K562 (cell line): ENCODE measurements at regions of chr14 and their contacts with region 1.

Region 1: DNA sequence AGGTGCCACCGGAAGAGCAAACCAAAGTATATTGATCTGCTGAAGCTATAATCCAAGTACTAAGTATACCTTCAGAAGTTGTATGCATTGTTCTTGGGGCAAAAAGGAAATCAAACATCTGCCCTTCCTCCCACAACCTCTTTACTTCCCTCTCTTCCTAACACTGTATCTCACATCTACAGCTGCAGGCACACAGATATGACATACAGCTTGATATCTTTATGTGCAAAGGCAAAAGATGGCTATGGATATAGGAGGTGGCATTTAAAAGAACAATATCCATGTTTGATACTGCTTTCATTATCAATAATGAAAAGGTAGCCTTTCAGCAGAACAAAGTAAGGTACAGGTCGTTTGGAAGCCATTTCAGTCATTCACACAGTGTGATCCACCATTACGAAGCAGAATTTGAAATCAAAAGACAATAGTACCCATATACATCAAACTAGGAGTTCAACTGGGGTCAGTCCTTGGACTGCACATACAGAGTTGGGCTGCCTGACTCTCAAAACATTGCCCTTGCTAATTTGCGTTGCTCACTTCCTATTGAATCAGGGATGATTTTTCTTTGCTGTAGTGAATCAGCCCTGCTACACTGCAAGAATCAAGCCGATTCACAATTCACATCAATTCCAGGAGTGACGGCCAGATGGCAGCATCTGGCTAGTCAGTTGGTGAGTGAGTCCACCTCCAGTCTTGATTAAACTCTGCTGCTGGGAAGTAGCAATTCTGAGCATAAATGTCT is 8.9 kb downstream of the ANG start:
- DNase-seq: peak; percentile 34 to 83 (median 56)
- ATAC-seq: peak; percentile 94
- H3K4me3 ChIP-seq: no peak overlapping the region
- H3K27ac ChIP-seq: no peak overlapping the region
- H3K4me1 ChIP-seq: peaks cover 0 to 9% of the 10 kb centered on the region in 2 experiments; a peak in 2 of 5 replicates
- H3K27me3 ChIP-seq: peaks cover 3 to 6% of the 10 kb centered on the region in 2 experiments; a peak in 3 of 5 replicates
- CTCF ChIP-seq: peak; percentile 77 to 89 (median 80)
- EP300 ChIP-seq: peak; percentile 51; the same call in 1 of the 2 replicates
- POLR2A ChIP-seq: no peak
- RAD21 ChIP-seq: peak; percentile 93 to 94

Region 2: DNA sequence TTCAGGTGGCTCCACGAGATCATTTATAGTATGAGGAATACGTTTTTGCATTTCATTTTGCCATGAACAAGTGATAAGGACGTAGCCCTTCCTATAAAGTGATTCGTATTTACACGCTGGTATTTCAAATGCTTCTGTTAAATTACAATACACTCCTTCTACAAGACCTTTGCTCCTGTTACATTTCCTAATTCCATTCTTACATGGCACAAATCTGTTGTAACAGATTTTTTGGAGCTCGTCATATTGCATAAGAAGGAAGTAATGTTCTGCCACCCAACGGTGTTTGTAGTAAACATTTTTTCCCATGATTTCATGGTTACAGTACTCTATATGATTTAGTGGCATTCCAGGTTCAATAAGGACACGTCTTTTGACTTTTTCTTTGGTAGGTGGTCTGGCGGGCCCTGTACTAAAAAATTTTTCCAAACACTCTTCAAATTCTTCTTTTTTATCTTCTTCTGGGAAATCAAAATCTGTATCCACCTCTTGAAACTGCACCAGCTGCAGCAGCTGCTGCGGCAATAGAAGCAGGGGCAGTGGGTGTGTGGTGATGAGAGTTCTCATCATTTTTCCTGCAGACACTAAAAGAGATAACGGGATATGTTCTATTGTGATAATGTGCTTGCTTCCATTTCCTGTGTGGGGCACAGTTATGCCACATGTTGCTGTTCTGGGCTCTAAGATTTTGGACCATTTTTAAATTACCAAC is 140.8 kb before region 1 on chr14:
- CTCF ChIA-PET with region 1: no interaction called
- POLR2A ChIA-PET with region 1: no interaction called
- in situ Hi-C with region 1: no loop called
- intact Hi-C with region 1: no loop called
- DNase-seq: peak in 2 of 4 experiments; percentile 25 to 56
- ATAC-seq: peak; percentile 61
- H3K4me3 ChIP-seq: no peak overlapping the region
- H3K27ac ChIP-seq: no peak overlapping the region
- H3K4me1 ChIP-seq: peaks cover 0 to 18% of the 10 kb centered on the region in 2 experiments; a peak in 3 of 5 replicates
- H3K27me3 ChIP-seq: no peaks in the 10 kb centered on the region
- CTCF ChIP-seq: no peak
- EP300 ChIP-seq: peak; percentile 43; the same call in 1 of the 2 replicates
- POLR2A ChIP-seq: no peak
- RAD21 ChIP-seq: no peak

Region 3: GRCh38 chr14:20799892-20800544 is 102.6 kb after region 1 on chr14:
- CTCF ChIA-PET with region 1: no interaction called
- POLR2A ChIA-PET with region 1: no interaction called
- in situ Hi-C with region 1: no loop called
- intact Hi-C with region 1: loop called (anchors 2 kb)
- DNase-seq: peak; percentile 23 to 70 (median 38)
- ATAC-seq: peak; percentile 61
- H3K4me3 ChIP-seq: peak overlapping the region; percentile 24
- H3K27ac ChIP-seq: peak overlapping the region; percentile 88
- H3K4me1 ChIP-seq: peaks cover 27 to 66% of the 10 kb centered on the region in 2 experiments
- H3K27me3 ChIP-seq: no peaks in the 10 kb centered on the region
- CTCF ChIP-seq: no peak
- EP300 ChIP-seq: no peak; the same call in 1 of the 2 replicates
- POLR2A ChIP-seq: no peak
- RAD21 ChIP-seq: no peak

Region 4: GRCh38 chr14:20866963-20867362 is 169.5 kb after region 1 on chr14:
- CTCF ChIA-PET with region 1: interaction called, 12 read pairs
- POLR2A ChIA-PET with region 1: no interaction called
- in situ Hi-C with region 1: no loop called
- intact Hi-C with region 1: loop called (anchors 5 kb)
- DNase-seq: no peak
- ATAC-seq: peak; percentile 27; the same call in 1 of the 3 replicates
- H3K4me3 ChIP-seq: no peak overlapping the region
- H3K27ac ChIP-seq: no peak overlapping the region
- H3K4me1 ChIP-seq: no peaks in the 10 kb centered on the region; a peak in 1 of 5 replicates
- H3K27me3 ChIP-seq: peaks cover 0 to 2% of the 10 kb centered on the region in 2 experiments; a peak in 1 of 5 replicates
- CTCF ChIP-seq: peak; percentile 51 to 57 (median 55)
- EP300 ChIP-seq: no peak
- POLR2A ChIP-seq: no peak
- RAD21 ChIP-seq: peak; percentile 24 to 60; a peak in 3 of 4 replicates

Region 5: DNA sequence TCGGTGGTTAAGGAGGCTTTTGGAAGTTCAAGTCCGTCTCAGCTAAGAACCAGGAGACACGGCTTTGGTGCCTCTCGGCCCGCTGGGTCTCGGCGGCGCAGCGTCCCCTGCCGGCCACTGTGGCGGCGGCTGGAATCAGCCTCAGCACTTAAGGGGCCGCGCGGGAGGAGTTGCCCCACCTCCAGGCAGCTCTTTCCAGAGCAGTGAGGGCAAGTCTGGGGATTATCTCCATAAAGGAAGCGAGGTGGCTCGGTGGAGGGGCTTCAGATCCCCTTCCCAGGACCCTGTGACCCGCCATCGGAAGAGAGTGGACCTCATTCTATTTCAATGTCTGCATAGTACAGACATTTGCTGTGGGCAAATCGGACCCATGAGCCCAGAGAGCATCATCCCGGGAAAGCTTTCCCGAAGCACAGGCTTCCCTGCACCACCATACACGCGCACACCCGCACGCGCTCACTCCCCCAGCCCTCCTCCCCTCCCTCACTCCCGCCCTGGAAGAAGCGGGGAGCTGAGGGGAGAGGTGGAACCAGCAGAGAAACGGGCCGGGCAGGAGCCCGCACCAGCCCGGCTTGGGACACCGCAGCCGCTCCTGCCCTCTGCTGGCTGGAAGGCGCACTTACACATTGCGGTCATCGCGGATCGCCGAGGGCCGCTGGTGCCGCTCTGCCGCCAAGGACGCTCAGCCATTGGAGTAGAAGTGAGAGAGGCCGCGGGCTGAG is 273.7 kb after region 1 on chr14:
- CTCF ChIA-PET with region 1: interaction called, 3 read pairs
- POLR2A ChIA-PET with region 1: no interaction called
- in situ Hi-C with region 1: loop called (anchors 25 kb)
- intact Hi-C with region 1: loop called (anchors 2 kb)
- DNase-seq: peak; percentile 80 to 85 (median 84)
- ATAC-seq: peak; percentile 97
- H3K4me3 ChIP-seq: peak overlapping the region; percentile 48
- H3K27ac ChIP-seq: no peak overlapping the region
- H3K4me1 ChIP-seq: peaks cover 0 to 10% of the 10 kb centered on the region in 2 experiments; a peak in 3 of 5 replicates
- H3K27me3 ChIP-seq: no peaks in the 10 kb centered on the region; a peak in 2 of 5 replicates
- CTCF ChIP-seq: peak; percentile 90 to 94 (median 91)
- EP300 ChIP-seq: no peak
- POLR2A ChIP-seq: no peak
- RAD21 ChIP-seq: peak; percentile 56 to 65